Panc1 (cell line): ENCODE measurements at regions of chr12 and their contacts with region 1.

Region 1: DNA sequence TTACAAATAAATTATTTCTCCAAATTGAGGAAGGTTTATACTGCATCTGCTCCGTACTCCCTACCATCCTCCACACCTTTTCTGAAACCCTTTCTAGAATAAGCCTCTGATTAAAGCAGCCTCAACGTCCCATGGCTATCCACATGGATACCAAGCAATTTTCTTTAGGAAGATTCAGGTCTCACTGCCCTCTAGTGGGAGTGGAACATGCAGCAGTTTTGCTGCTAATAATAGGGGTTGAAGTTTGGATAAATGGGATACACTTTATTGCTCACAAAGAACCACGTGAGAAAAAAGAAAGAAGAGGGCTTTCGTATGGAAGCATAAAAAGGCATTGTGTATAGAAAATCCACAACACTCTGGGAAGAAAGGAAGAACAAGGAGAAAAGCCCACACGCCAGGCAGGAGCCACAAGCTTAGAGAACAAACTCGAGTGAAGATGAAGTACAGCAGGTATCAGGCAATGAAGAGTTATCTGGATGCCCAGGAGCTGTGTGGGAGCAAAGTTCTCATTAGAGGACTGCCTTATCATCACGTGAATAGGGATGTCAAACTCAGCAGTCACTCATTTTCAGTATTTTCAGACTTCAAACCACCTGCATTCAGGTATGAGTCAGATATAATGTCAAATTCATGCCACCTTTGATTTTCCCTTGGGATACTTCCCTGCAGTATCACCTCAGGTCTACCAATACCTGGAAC is 45.8 kb downstream of the CCER1 start:
- DNase-seq: peak; percentile 5
- ATAC-seq: no peak
- H3K4me3 ChIP-seq: no peak overlapping the region
- H3K27ac ChIP-seq: no peak overlapping the region
- H3K4me1 ChIP-seq: no peaks in the 10 kb centered on the region
- H3K27me3 ChIP-seq: no peaks in the 10 kb centered on the region
- CTCF ChIP-seq: peak; percentile 73

Region 2: GRCh38 chr12:90690120-90690519 is 219.1 kb before region 1 on chr12:
- CTCF ChIA-PET with region 1: no interaction called
- POLR2A ChIA-PET with region 1: no interaction called
- in situ Hi-C with region 1: no loop called
- intact Hi-C with region 1: no loop called
- DNase-seq: no peak
- ATAC-seq: no peak
- H3K4me3 ChIP-seq: no peak overlapping the region
- H3K27ac ChIP-seq: no peak overlapping the region
- H3K4me1 ChIP-seq: no peaks in the 10 kb centered on the region
- H3K27me3 ChIP-seq: no peaks in the 10 kb centered on the region
- CTCF ChIP-seq: no peak

Region 3: DNA sequence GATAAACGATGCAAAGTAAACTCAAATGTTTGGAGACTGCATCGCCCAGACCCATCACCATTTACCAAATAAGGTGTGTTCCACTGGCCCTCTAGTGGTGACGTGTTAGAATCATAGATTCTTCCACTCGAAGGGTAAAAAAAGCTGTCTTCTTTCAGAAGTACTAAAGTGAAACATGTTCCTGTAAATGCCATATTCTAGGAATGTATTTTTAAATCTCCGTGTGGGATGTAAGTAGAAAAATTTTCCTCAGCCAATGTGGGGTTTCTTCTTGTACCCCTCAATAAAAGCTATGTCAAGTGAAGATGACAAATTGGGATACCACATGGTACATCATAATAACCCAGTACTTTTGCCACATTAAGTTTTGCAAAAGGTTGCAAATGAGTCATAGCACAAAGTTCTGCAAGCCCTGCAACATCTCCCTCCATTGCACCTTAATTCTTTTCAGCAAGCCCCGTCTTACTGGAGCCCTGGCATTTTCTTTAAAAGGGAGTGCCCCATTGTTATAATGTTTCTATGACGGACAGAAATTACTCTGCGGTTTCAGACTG is 55.0 kb before region 1 on chr12:
- CTCF ChIA-PET with region 1: no interaction called
- POLR2A ChIA-PET with region 1: no interaction called
- in situ Hi-C with region 1: no loop called
- intact Hi-C with region 1: no loop called
- DNase-seq: no peak
- ATAC-seq: no peak
- H3K4me3 ChIP-seq: no peak overlapping the region
- H3K27ac ChIP-seq: no peak overlapping the region
- H3K4me1 ChIP-seq: peaks cover 1% of the 10 kb centered on the region; the same call in 1 of the 2 replicates
- H3K27me3 ChIP-seq: no peaks in the 10 kb centered on the region
- CTCF ChIP-seq: peak; percentile 71

Region 4: GRCh38 chr12:90896164-90896563 is 13.1 kb before region 1 on chr12:
- CTCF ChIA-PET with region 1: no interaction called
- POLR2A ChIA-PET with region 1: no interaction called
- in situ Hi-C with region 1: no loop called
- intact Hi-C with region 1: loop called (anchors 1 kb)
- DNase-seq: no peak
- ATAC-seq: no peak
- H3K4me3 ChIP-seq: no peak overlapping the region
- H3K27ac ChIP-seq: no peak overlapping the region
- H3K4me1 ChIP-seq: no peaks in the 10 kb centered on the region
- H3K27me3 ChIP-seq: no peaks in the 10 kb centered on the region
- CTCF ChIP-seq: no peak